PC-9 (cell line): ENCODE measurements at regions of chr22 and their contacts with region 1.

Region 1: GRCh38 chr22:38143036-38143697 is 32.7 kb upstream of the BAIAP2L2 start:
- DNase-seq: peak; percentile 88 to 98
- H3K4me3 ChIP-seq: no peak overlapping the region
- H3K27ac ChIP-seq: peak overlapping the region; percentile 82
- H3K4me1 ChIP-seq: peaks cover 57% of the 10 kb centered on the region
- H3K27me3 ChIP-seq: no peaks in the 10 kb centered on the region
- CTCF ChIP-seq: 0 out of 2 replicates have a peak, but pooled peaks have one; percentile 26

Region 2: GRCh38 chr22:38109371-38110001 is 33.7 kb before region 1 on chr22:
- CTCF ChIA-PET with region 1: interaction called, 6 read pairs
- POLR2A ChIA-PET with region 1: no interaction called
- intact Hi-C with region 1: loop called (anchors 2 kb)
- DNase-seq: peak in 1 of 2 experiments; percentile 35
- H3K4me3 ChIP-seq: no peak overlapping the region
- H3K27ac ChIP-seq: no peak overlapping the region
- H3K4me1 ChIP-seq: peaks cover 14% of the 10 kb centered on the region
- H3K27me3 ChIP-seq: no peaks in the 10 kb centered on the region
- CTCF ChIP-seq: no peak

Region 3: GRCh38 chr22:38181453-38182247 is 38.5 kb after region 1 on chr22 and contains the start of gene PLA2G6:
- CTCF ChIA-PET with region 1: interaction called, 4 read pairs
- POLR2A ChIA-PET with region 1: no interaction called
- intact Hi-C with region 1: loop called (anchors 1 kb)
- DNase-seq: peak; percentile 99 to 100
- H3K4me3 ChIP-seq: peak within 1 kb of the TSS; percentile 66
- H3K27ac ChIP-seq: peak within 1 kb of the TSS; percentile 98
- H3K4me1 ChIP-seq: peaks cover 78% of the 10 kb centered on the region
- H3K27me3 ChIP-seq: no peaks in the 10 kb centered on the region
- CTCF ChIP-seq: no peak
- total RNA-seq, gene PLA2G6: 39.8 and 45.6 TPM in 2 replicates

Region 4: DNA sequence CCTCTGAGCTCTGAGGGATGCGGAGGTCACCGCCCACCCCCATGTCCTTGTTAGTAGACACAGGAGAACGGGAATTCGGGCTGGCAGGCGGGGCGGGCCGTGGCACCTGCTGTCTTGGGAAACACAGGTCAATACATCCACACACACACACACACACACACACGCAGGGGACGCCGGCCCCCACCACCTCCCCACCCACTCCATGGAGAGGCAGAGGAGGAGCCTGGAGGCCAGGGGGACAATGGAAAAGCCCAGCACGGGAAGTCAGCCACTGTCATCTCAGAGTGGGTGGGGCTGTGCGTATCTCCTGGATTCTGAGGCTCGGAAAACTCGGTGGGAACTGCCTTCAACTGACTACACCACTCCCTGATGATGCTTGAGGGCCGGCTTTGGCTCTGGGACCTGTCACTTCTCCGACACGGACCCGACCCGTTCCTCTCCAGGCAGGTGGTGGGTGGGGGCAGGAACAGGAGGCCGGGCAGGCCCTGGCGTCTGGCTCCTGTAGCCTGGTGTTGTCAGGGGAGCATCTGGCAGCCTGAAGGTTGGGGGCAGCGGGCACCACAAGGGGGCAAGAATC is 148.1 kb after region 1 on chr22:
- CTCF ChIA-PET with region 1: no interaction called
- POLR2A ChIA-PET with region 1: interaction called, 13 read pairs
- intact Hi-C with region 1: loop called (anchors 10 kb)
- DNase-seq: peak; percentile 24 to 52
- H3K4me3 ChIP-seq: no peak overlapping the region
- H3K27ac ChIP-seq: peak overlapping the region; percentile 94
- H3K4me1 ChIP-seq: peaks cover 73% of the 10 kb centered on the region
- H3K27me3 ChIP-seq: no peaks in the 10 kb centered on the region
- CTCF ChIP-seq: no peak

Region 5: DNA sequence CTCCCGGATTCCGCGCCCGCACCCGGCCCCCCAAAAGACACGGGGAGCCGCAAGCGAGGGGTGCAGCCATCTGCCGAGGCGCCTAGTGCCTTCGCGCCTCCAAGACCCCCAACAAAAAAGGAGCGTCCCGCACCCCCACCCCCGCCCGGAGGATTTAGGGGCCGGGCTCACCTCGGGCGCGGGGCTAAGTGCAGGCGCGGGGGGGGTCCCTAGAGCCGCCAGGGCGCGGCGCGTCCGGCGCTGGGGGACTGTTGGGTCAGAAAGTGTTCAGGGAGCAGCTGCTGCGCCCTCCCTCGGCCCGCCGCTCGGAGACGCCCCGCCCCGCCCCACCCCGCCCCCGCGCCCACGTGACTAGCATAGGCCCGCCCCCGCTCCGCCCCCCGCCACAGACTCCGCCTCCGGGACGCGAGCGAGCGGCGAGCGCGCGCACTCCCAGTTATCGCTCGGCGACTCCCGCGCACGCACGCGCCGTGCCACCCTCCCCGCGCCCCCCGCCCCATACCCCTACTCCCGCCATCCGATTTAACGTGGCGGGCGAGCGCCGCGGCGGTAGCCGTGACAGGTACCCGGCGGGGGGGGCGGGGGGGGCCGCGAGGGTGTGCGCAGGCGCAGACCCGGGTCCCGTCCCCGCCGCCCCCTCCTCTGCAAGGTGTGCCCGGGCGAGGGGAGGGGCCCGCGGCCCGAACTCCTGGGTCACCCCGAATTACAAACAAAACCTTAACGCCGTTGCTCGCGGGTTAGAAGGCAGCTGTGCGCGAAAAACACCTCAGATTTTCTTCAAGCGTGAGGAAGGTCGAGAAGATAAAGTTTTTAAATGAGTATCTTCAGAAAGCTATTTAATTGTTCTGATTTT is 255.7 kb after region 1 on chr22:
- CTCF ChIA-PET with region 1: no interaction called
- POLR2A ChIA-PET with region 1: no interaction called
- intact Hi-C with region 1: loop called (anchors 1 kb)
- DNase-seq: peak; percentile 50 to 89
- H3K4me3 ChIP-seq: peak overlapping the region; percentile 99
- H3K27ac ChIP-seq: peak overlapping the region; percentile 56
- H3K4me1 ChIP-seq: peaks cover 30% of the 10 kb centered on the region
- H3K27me3 ChIP-seq: no peaks in the 10 kb centered on the region
- CTCF ChIP-seq: no peak